CD14-positive monocyte (primary cell): ENCODE measurements at regions of chr18 and their contacts with region 1.

Region 1: DNA sequence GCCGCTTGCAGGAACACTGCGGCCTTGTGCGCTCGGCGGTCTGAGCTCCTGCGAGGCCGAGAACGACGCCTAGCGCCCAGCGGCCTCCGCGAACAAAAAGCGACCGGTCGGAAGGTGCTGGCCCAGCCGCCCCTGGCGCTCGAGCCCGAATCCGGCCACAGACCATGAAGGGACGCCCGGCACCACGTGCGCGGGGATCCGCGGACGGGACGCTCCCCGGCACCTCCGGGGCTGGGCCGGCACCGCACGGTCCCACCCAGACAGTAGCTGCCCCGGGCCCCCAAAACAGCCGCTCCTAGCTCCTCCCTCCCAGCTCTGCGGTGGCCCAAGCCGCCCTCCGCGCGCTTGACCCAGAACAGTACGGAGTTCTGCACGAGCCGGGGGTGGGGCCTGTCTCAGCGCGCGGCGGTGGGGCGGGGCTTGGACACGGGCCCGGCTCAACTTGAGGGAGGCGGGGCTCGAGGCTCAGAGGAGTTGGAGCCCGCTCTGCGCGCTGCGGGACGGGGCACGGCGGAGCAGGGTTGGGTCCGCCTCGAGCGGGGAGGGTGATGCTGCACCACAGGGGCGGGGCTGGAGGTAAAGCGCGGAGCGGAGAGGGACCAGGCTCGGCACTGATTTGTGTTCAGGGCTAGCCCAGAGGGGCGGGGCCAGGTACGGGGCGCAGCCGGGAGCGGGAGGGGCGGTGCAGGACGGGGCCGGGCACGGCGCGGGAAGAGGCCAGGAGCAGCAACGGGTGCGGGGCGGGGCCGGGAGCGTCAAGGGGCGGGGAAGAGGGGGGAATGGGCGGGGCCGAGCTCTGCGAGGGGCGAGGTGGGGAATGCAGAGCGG is 538 bp upstream of the IMPA2 start:
- DNase-seq: peak; percentile 96 to 99 (median 96)
- H3K4me3 ChIP-seq: peak overlapping the region; percentile 51 to 90 (median 60)
- H3K4me3 Mint-ChIP-seq: peak overlapping the region; percentile 91 to 93
- H3K27ac ChIP-seq: peak overlapping the region; percentile 57 to 66
- H3K27ac Mint-ChIP-seq: peak overlapping the region; percentile 71 to 94 (median 89)
- H3K4me1 ChIP-seq: peaks cover 49 to 59% of the 10 kb centered on the region in 2 donors
- H3K4me1 Mint-ChIP-seq: peaks cover 58% of the 10 kb centered on the region
- H3K27me3 ChIP-seq: no peaks in the 10 kb centered on the region
- H3K27me3 Mint-ChIP-seq: no peaks in the 10 kb centered on the region
- CTCF ChIP-seq: no peak

Region 2: GRCh38 chr18:11851146-11851805 is 129.5 kb before region 1 on chr18 and contains the start of gene CHMP1B:
- intact Hi-C with region 1: loop called (anchors 2 to 5 kb)
- DNase-seq: peak; percentile 96 to 98 (median 97)
- H3K4me3 ChIP-seq: peak within 1 kb of the TSS; percentile 81 to 96 (median 87)
- H3K4me3 Mint-ChIP-seq: peak within 1 kb of the TSS; percentile 100
- H3K27ac ChIP-seq: peak within 1 kb of the TSS; percentile 93 to 98
- H3K27ac Mint-ChIP-seq: peak within 1 kb of the TSS; percentile 99 to 100 (median 100)
- H3K4me1 ChIP-seq: peaks cover 28 to 51% of the 10 kb centered on the region in 2 donors
- H3K4me1 Mint-ChIP-seq: peaks cover 40% of the 10 kb centered on the region
- H3K27me3 ChIP-seq: no peaks in the 10 kb centered on the region
- H3K27me3 Mint-ChIP-seq: peaks cover 3 to 14% (median 4%) of the 10 kb centered on the region in 3 donors
- CTCF ChIP-seq: no peak
- polyA plus RNA-seq, gene CHMP1B: 95.2 to 182 (median 105) TPM

Region 3: DNA sequence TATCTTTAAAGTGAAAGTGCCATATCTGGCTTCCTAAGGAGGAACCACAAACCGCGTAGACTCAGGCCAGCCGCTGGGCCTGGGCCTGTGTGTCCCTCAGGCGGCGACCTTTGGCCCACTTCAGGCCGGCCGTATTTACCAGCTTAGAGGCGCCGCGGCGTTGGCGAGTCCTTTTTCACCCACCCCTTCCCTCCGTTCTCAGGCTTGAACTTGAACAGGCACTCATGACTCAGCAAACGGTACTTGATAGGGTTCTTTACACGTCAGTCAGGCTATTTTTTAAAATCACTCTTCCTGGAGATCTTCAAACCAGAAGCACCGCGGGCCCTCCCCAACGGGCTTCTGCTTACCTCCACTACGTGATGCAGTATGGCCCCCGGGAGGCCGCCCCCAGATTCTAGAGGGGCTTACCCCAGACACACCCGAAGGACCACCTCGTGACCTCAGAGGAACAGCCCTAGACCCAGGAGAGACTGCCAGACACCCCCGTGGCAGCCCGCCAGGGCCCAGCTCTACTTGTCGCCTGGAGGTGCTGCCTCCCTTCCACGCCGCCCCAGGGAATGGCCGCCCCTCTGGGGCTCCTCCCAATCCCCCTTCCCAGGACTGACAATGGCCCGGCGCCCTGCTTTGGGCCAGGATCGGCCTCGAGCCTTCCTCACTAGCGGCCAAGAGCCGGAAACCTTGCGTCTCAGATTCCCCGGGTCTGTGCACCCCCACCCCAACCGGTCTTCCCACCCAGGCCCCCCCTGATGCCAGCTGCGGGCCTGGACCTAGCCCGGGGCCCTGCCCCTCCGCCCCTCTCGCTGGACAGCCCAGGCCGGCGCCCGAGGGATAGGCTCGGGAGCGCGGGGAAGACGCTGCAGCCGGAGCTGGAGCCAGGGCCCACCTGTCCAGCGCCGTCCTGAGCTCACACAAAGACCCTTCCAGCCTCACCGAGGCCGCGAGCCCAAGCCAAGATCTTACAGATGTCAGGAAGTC is 33.3 kb before region 1 on chr18:
- intact Hi-C with region 1: loop called (anchors 5 kb)
- DNase-seq: peak; percentile 93 to 95 (median 93)
- H3K4me3 ChIP-seq: peak overlapping the region; percentile 50 to 84 (median 69)
- H3K4me3 Mint-ChIP-seq: peak overlapping the region; percentile 90 to 96
- H3K27ac ChIP-seq: peak overlapping the region; percentile 91 to 93
- H3K27ac Mint-ChIP-seq: peak overlapping the region; percentile 90 to 97 (median 96)
- H3K4me1 ChIP-seq: peaks cover 19 to 22% of the 10 kb centered on the region in 2 donors
- H3K4me1 Mint-ChIP-seq: peaks cover 25% of the 10 kb centered on the region
- H3K27me3 ChIP-seq: no peaks in the 10 kb centered on the region
- H3K27me3 Mint-ChIP-seq: peaks cover 0 to 2% (median 0%) of the 10 kb centered on the region in 3 donors
- CTCF ChIP-seq: no peak

Region 4: DNA sequence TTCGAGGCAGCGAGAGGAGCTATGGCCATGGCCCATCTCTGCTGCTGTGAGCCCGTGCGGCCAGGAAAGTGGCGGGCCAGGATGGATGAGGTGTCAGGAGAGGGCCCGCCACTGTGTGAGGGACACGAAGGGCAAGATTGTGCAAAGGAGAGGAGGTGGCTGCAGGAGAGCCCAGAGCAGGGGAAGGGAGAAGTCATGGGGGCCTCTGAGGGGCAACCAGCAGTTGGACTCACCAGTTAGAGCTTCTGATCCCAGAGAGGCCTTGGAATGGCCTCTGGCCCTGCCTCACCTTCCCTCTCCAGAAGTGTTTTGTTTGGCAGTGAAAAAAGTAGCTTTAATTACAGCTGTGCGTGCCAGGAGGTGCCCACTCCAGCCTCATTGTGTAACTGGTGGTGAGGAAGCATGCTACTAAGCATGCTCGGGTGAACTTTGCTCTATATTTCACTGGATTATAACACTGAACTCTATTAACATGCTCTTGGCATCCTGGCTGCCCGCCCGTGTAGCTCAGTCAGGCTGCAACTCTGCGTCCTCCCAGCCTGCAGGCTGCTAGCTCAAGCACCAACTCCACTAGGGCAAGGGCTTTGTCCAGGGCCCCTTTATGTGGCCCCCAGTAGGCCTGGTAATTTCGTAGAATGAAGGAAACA is 34.8 kb after region 1 on chr18:
- intact Hi-C with region 1: no loop called
- DNase-seq: no peak
- H3K4me3 ChIP-seq: no peak overlapping the region
- H3K4me3 Mint-ChIP-seq: no peak overlapping the region
- H3K27ac ChIP-seq: peak overlapping the region in 1 of 2 donors; percentile 26
- H3K27ac Mint-ChIP-seq: peak overlapping the region in 3 of 7 donors; percentile 10 to 71 (median 52)
- H3K4me1 ChIP-seq: no peaks in the 10 kb centered on the region
- H3K4me1 Mint-ChIP-seq: no peaks in the 10 kb centered on the region
- H3K27me3 ChIP-seq: no peaks in the 10 kb centered on the region
- H3K27me3 Mint-ChIP-seq: peaks cover 0 to 2% (median 0%) of the 10 kb centered on the region in 3 donors
- CTCF ChIP-seq: no peak

Region 5: DNA sequence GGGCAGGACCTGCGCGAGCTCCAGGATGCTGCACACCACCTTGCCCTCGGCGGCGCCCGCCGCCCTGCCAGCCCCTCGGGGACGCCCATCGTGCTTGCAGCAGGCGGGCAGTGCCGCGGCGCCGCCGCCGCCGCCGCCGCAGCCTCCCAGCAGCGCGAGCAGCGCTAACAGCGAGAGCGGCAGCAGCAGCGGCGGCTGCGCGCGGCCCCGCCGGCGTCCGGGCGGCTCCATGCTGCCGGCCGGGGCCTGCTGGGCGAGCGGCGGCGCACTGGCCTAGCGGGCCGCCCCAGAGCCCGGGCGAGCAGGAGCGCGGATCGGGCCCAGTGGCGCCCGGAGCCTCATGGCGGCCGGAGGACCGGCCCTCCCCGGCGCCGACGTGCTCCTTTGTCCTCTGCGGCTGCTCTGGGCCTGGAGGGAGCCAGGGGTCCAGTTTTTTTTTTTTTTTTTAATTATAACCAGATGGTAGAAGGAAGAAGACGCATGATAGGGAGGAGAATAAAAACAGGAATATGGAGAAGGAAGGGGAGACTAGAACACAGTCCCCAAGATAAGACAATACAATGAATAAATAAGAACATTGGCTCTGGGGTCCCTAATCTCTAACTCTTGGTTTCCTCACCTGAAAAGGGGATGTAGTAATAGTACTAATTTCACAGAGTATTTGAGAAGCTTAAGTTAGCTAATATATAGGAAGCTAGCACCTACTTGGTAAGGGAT is 95.8 kb after region 1 on chr18:
- intact Hi-C with region 1: no loop called
- DNase-seq: peak in 1 of 3 donors; percentile 5
- H3K4me3 ChIP-seq: no peak overlapping the region
- H3K4me3 Mint-ChIP-seq: peak overlapping the region in 1 of 2 donors; percentile 64
- H3K27ac ChIP-seq: no peak overlapping the region
- H3K27ac Mint-ChIP-seq: peak overlapping the region in 1 of 7 donors; percentile 14
- H3K4me1 ChIP-seq: no peaks in the 10 kb centered on the region
- H3K4me1 Mint-ChIP-seq: peaks cover 4% of the 10 kb centered on the region
- H3K27me3 ChIP-seq: peaks cover 2 to 6% of the 10 kb centered on the region in 2 donors
- H3K27me3 Mint-ChIP-seq: peaks cover 9 to 28% (median 17%) of the 10 kb centered on the region in 3 donors
- CTCF ChIP-seq: no peak

Region 6: DNA sequence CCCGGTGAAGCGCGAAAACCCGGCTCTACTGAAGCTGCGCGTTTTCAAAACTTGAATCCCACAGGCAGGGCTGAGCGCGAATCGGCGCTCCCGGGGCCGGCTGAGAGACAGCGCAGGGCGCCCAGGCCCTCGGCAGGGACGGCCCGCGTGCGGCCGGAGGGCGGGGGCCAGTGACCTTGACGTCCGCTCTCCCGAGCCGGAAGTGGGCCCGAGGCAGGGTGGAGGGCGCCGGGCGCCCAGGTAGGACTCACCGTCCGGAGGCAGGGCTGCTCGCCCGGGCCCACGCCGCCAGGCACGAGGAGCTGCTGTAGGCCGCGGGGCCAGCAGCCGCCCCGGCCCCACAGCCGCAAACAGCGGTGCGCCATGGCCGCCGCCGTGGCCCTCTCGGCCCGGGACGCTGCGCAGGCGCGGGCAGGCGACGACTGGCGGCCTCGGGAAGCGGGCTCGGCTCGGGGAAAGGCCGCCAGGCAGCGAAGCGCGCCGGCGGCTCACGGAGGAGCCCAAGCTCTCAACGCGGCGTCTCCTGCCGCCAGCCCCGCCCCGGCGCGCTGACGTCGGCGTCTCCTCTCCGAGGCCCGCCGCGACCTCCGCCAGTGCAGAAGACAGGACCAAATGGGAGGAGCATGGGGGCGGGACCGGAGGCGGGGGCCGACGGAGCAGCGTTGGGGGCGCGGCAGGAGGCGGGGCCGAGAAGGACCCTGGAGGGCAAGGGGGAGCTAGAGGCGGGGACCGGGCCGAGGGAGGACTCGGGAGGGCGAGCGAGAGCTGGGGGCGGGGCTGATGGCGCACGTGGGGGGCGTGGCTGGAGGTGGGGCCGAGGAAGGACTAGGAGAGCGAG is 396.2 kb after region 1 on chr18 and contains the start of gene AFG3L2:
- intact Hi-C with region 1: loop called (anchors 5 to 10 kb)
- DNase-seq: peak; percentile 98 to 99 (median 99)
- H3K4me3 ChIP-seq: peak within 1 kb of the TSS; percentile 66 to 77 (median 66)
- H3K4me3 Mint-ChIP-seq: peak within 1 kb of the TSS; percentile 86 to 96
- H3K27ac ChIP-seq: peak within 1 kb of the TSS; percentile 89 to 96
- H3K27ac Mint-ChIP-seq: peak within 1 kb of the TSS; percentile 92 to 98 (median 96)
- H3K4me1 ChIP-seq: peaks cover 25 to 27% of the 10 kb centered on the region in 2 donors
- H3K4me1 Mint-ChIP-seq: peaks cover 36% of the 10 kb centered on the region
- H3K27me3 ChIP-seq: no peaks in the 10 kb centered on the region
- H3K27me3 Mint-ChIP-seq: no peaks in the 10 kb centered on the region
- CTCF ChIP-seq: no peak
- polyA plus RNA-seq, gene AFG3L2: 13.9 to 15.5 (median 13.9) TPM